ENCODE measurements at regions of chr2 and their contacts with region 1.

Region 1: DNA sequence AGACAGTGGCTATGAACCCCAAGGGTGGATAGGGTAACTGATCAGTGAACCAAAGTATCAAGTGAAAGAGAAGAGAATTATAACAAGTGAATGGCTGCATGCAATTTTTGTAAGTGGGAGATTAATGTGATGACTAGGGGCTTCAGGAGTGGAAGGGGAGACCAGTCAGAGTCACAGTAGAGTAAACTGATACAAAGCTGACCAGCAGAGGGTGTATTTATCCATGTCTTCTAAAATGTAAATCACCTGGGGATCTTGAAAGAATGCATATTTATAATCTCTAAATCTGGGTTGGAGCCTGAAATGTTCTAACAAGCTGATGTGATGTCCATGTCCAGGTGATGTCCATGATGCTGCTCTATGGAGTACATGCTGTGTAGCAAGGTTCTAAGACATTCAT is 1351.3 kb upstream of the CHAC2 start:
- DNase-seq: peak; percentile 47
- ATAC-seq: peak; percentile 64
- H3K4me3 ChIP-seq: no peak overlapping the region
- H3K27ac ChIP-seq: no peak overlapping the region
- H3K4me1 ChIP-seq: 0 out of 2 replicates have a peak, but pooled peaks cover 3% of the 10 kb centered on the region
- H3K27me3 ChIP-seq: no peaks in the 10 kb centered on the region
- CTCF ChIP-seq: peak; percentile 60

Region 2: GRCh38 chr2:52144585-52144984 is 271.8 kb before region 1 on chr2:
- CTCF ChIA-PET with region 1: no interaction called
- POLR2A ChIA-PET with region 1: no interaction called
- intact Hi-C with region 1: loop called (anchors 1 kb)
- DNase-seq: no peak
- ATAC-seq: no peak
- H3K4me3 ChIP-seq: no peak overlapping the region
- H3K27ac ChIP-seq: no peak overlapping the region
- H3K4me1 ChIP-seq: peaks cover 4% of the 10 kb centered on the region; the same call in 1 of the 2 replicates
- H3K27me3 ChIP-seq: no peaks in the 10 kb centered on the region
- CTCF ChIP-seq: peak; percentile 35; the same call in 1 of the 2 replicates

Region 3: GRCh38 chr2:52613064-52613463 is 196.7 kb after region 1 on chr2:
- CTCF ChIA-PET with region 1: no interaction called
- POLR2A ChIA-PET with region 1: no interaction called
- intact Hi-C with region 1: loop called (anchors 5 kb)
- DNase-seq: no peak
- ATAC-seq: peak; percentile 24; the same call in 1 of the 2 replicates
- H3K4me3 ChIP-seq: no peak overlapping the region
- H3K27ac ChIP-seq: no peak overlapping the region
- H3K4me1 ChIP-seq: no peaks in the 10 kb centered on the region
- H3K27me3 ChIP-seq: no peaks in the 10 kb centered on the region
- CTCF ChIP-seq: no peak; the same call in 1 of the 2 replicates

Region 4: GRCh38 chr2:52976253-52976949 is 560.1 kb after region 1 on chr2:
- CTCF ChIA-PET with region 1: no interaction called
- POLR2A ChIA-PET with region 1: no interaction called
- intact Hi-C with region 1: loop called (anchors 5 kb)
- DNase-seq: peak; percentile 72
- ATAC-seq: peak; percentile 88
- H3K4me3 ChIP-seq: no peak overlapping the region
- H3K27ac ChIP-seq: no peak overlapping the region
- H3K4me1 ChIP-seq: no peaks in the 10 kb centered on the region
- H3K27me3 ChIP-seq: no peaks in the 10 kb centered on the region
- CTCF ChIP-seq: peak; percentile 93

Measured in PC-3 (cell line).